ENCODE measurements at regions of chr10 and their contacts with region 1.

Region 1: DNA sequence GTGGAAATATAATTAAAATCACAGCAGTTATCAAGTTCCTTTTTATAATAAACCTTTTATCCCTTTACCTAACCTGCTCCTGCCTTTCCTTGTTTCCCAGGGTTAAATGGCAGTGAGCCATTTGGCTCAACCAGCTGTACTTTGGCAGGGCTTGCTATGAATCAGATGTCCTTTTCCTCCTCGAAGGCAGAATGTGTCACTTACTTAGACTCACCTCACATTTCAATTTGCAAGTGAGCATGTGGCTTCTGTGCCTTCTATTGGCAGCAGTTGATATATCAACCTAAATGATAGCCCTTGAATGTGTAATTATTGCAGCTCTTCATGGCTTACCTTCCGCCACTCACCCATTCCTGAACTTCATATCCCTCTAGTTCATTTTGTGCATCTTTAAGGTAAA is 301.7 kb downstream of the CSTF2T start:
- DNase-seq: peak; percentile 100
- ATAC-seq: peak; percentile 99
- H3K4me3 ChIP-seq: no peak overlapping the region
- H3K27ac ChIP-seq: peak overlapping the region; percentile 50
- H3K4me1 ChIP-seq: peaks cover 14% of the 10 kb centered on the region
- H3K27me3 ChIP-seq: no peaks in the 10 kb centered on the region
- CTCF ChIP-seq: peak; percentile 83

Region 2: DNA sequence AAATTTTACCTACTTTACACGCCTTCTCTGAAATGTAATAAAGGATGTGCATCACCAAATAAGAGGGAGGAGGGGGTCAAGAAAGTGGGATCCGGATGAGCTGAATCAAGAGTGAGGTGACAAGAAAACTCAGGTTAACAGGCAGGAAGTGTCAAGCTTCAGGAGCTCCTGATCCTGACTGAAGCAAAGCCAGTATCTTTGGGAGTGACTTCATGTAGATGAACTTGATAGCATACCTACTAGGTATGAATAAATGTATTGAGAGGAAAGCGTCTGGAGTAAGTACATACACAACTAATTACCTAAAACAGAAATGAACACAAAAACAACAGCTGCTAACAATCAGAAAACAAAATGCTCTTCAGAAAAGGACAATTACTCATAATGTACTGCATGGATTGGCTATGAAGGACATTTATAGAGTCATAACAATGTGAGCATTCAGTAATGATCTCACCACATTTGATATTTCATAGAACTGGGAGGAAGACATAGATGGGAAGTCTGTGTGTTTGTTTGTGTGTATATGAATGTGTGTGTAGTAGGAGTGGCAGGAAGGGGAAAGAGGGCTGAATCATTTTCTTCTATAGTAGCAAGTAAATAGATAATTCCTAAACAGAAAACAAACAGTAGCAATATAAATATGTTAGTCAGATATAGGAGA is 294.0 kb before region 1 on chr10:
- CTCF ChIA-PET with region 1: no interaction called
- POLR2A ChIA-PET with region 1: no interaction called
- intact Hi-C with region 1: loop called (anchors 1 kb)
- DNase-seq: peak; percentile 99
- ATAC-seq: peak; percentile 99
- H3K4me3 ChIP-seq: peak overlapping the region; percentile 26; the same call in 1 of the 2 replicates
- H3K27ac ChIP-seq: peak overlapping the region; percentile 73
- H3K4me1 ChIP-seq: peaks cover 30% of the 10 kb centered on the region
- H3K27me3 ChIP-seq: no peaks in the 10 kb centered on the region
- CTCF ChIP-seq: no peak

Region 3: GRCh38 chr10:51231754-51232153 is 165.9 kb before region 1 on chr10:
- CTCF ChIA-PET with region 1: no interaction called
- POLR2A ChIA-PET with region 1: no interaction called
- intact Hi-C with region 1: loop called (anchors 2 kb)
- DNase-seq: peak; percentile 94
- ATAC-seq: peak; percentile 78
- H3K4me3 ChIP-seq: no peak overlapping the region
- H3K27ac ChIP-seq: no peak overlapping the region
- H3K4me1 ChIP-seq: peaks cover 34% of the 10 kb centered on the region
- H3K27me3 ChIP-seq: no peaks in the 10 kb centered on the region
- CTCF ChIP-seq: no peak

Region 4: GRCh38 chr10:51301644-51302043 is 96.1 kb before region 1 on chr10:
- CTCF ChIA-PET with region 1: no interaction called
- POLR2A ChIA-PET with region 1: no interaction called
- intact Hi-C with region 1: loop called (anchors 1 kb)
- DNase-seq: no peak
- ATAC-seq: no peak; the same call in 1 of the 2 replicates
- H3K4me3 ChIP-seq: no peak overlapping the region
- H3K27ac ChIP-seq: no peak overlapping the region
- H3K4me1 ChIP-seq: peaks cover 17% of the 10 kb centered on the region
- H3K27me3 ChIP-seq: no peaks in the 10 kb centered on the region
- CTCF ChIP-seq: no peak

Region 5: GRCh38 chr10:51462076-51462779 is 64.5 kb after region 1 on chr10:
- CTCF ChIA-PET with region 1: no interaction called
- POLR2A ChIA-PET with region 1: no interaction called
- intact Hi-C with region 1: no loop called
- DNase-seq: peak; percentile 99
- ATAC-seq: peak; percentile 98
- H3K4me3 ChIP-seq: no peak overlapping the region
- H3K27ac ChIP-seq: 0 out of 2 replicates have a peak overlapping the region, but pooled peaks have one; percentile 0
- H3K4me1 ChIP-seq: peaks cover 22% of the 10 kb centered on the region
- H3K27me3 ChIP-seq: no peaks in the 10 kb centered on the region
- CTCF ChIP-seq: no peak